ENCODE measurements at regions of chr14 and their contacts with region 1.

Region 1: DNA sequence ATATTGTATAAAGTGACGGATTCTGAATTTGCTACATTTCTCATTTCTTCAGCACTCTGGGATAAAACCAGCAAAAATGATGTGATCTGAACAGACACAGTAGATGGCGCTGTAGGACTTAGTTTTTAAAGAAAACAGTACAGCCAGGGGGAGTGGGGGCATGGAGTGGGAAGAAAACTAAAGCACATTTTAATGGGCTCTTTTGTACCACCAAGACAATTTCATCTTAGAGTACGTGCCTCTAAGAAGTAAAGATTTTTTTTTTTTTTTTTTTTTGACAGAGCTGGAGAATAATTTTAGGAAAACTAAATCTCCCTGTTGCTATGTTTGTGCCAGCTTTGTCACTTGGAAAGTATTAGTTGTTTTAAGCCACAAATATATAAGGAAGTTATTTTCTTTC is 124.4 kb downstream of the RAD51B start:
- DNase-seq: peak; percentile 75
- H3K4me3 Mint-ChIP-seq: no peak overlapping the region
- H3K27ac Mint-ChIP-seq: peak overlapping the region; percentile 87
- H3K4me1 Mint-ChIP-seq: peaks cover 41% of the 10 kb centered on the region
- H3K27me3 Mint-ChIP-seq: no peaks in the 10 kb centered on the region
- CTCF ChIP-seq: peak; percentile 60

Region 2: DNA sequence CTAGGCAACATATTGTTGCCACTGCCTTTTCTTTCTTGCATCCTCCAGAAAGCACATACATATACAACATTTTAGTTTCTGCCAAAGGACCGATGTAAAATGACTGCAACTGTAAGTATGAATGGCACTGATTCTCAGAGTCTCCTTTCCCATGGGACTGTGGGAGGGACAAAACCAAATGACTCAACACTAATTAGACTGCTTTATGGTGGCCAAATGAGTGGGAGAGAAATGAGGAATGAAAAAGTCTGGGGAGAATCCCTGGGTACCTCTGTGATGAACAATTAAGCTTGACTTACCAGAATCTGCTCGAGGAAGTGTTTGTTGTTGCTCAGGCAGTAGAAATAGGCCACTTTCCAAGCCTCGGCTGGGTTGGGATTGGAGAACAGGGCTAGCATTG is 137.7 kb before region 1 on chr14:
- CTCF ChIA-PET with region 1: no interaction called
- intact Hi-C with region 1: no loop called
- DNase-seq: no peak
- H3K4me3 Mint-ChIP-seq: no peak overlapping the region
- H3K27ac Mint-ChIP-seq: no peak overlapping the region
- H3K4me1 Mint-ChIP-seq: no peaks in the 10 kb centered on the region
- H3K27me3 Mint-ChIP-seq: no peaks in the 10 kb centered on the region
- CTCF ChIP-seq: no peak

Region 3: DNA sequence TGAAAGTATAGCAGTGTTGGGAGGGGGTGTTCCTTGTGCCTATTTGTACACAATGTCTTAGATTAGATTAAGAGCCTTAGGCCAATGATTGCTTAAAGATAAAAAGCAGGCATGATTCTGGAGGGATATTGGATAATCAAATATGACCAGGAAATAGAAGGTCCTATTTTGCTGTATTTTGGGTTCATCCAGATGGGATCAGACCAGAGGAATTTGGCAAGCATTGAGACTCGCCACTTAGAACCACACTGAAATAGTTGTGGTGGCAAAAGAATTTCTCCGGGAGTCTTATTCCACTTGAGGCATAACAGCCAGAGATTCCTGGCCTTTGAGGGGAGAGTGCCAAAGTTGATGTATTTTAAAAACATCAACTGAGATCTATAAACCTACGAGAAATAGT is 202.9 kb after region 1 on chr14:
- CTCF ChIA-PET with region 1: interaction called, 4 read pairs
- intact Hi-C with region 1: loop called (anchors 5 kb)
- DNase-seq: peak; percentile 35
- H3K4me3 Mint-ChIP-seq: no peak overlapping the region
- H3K27ac Mint-ChIP-seq: peak overlapping the region; percentile 93
- H3K4me1 Mint-ChIP-seq: peaks cover 59% of the 10 kb centered on the region
- H3K27me3 Mint-ChIP-seq: no peaks in the 10 kb centered on the region
- CTCF ChIP-seq: no peak

Region 4: GRCh38 chr14:68232300-68233055 is 288.5 kb after region 1 on chr14:
- CTCF ChIA-PET with region 1: no interaction called
- intact Hi-C with region 1: loop called (anchors 5 kb)
- DNase-seq: peak; percentile 76
- H3K4me3 Mint-ChIP-seq: no peak overlapping the region
- H3K27ac Mint-ChIP-seq: no peak overlapping the region
- H3K4me1 Mint-ChIP-seq: no peaks in the 10 kb centered on the region
- H3K27me3 Mint-ChIP-seq: no peaks in the 10 kb centered on the region
- CTCF ChIP-seq: no peak

Region 5: GRCh38 chr14:68359837-68360552 is 416.0 kb after region 1 on chr14:
- CTCF ChIA-PET with region 1: interaction called, 4 read pairs
- intact Hi-C with region 1: loop called (anchors 5 kb)
- DNase-seq: peak; percentile 48
- H3K4me3 Mint-ChIP-seq: no peak overlapping the region
- H3K27ac Mint-ChIP-seq: peak overlapping the region; percentile 67
- H3K4me1 Mint-ChIP-seq: peaks cover 27% of the 10 kb centered on the region
- H3K27me3 Mint-ChIP-seq: no peaks in the 10 kb centered on the region
- CTCF ChIP-seq: no peak

Region 6: GRCh38 chr14:68788996-68789820 is 845.3 kb after region 1 on chr14:
- CTCF ChIA-PET with region 1: interaction called, 10 read pairs
- intact Hi-C with region 1: loop called (anchors 5 kb)
- DNase-seq: peak; percentile 91
- H3K4me3 Mint-ChIP-seq: peak overlapping the region; percentile 85
- H3K27ac Mint-ChIP-seq: peak overlapping the region; percentile 81
- H3K4me1 Mint-ChIP-seq: peaks cover 27% of the 10 kb centered on the region
- H3K27me3 Mint-ChIP-seq: no peaks in the 10 kb centered on the region
- CTCF ChIP-seq: peak; percentile 49